A549 (cell line): ENCODE measurements at regions of chr20 and their contacts with region 1.

Region 1: DNA sequence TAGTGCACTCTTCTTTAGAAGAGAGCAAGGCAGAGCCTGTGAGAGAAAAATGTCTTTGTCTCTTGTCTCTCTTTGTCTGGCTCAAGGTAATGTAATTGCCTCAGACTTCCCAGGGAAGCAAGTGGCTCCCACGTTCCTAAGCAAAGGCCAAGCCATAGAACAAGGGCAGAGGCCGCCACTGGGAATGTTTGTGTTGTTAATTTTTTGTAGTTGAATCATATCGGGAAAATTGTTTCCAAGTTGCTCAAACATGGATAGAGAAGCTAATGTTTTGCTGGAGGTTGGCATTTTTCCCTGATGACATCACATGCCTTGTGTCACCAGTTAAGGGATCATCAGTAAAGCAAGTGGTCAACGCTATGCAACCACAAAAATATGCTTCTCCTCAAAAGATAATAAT is 211.5 kb upstream of the FOXA2 start:
- DNase-seq: peak; percentile 79 to 97
- ATAC-seq: peak; percentile 92
- H3K4me3 ChIP-seq: no peak overlapping the region
- H3K27ac ChIP-seq: peak overlapping the region; percentile 92 to 97
- H3K4me1 ChIP-seq: peaks cover 66% of the 10 kb centered on the region
- CTCF ChIP-seq: no peak
- EP300 ChIP-seq: peak; percentile 96 to 97; a peak in 4 of 5 replicates
- POLR2A ChIP-seq: no peak
- RAD21 ChIP-seq: peak; percentile 38 to 78

Region 2: GRCh38 chr20:22590662-22591061 is 205.2 kb before region 1 on chr20:
- CTCF ChIA-PET with region 1: no interaction called
- POLR2A ChIA-PET with region 1: no interaction called
- DNase-seq: no peak
- ATAC-seq: no peak
- H3K4me3 ChIP-seq: no peak overlapping the region
- H3K27ac ChIP-seq: no peak overlapping the region
- H3K4me1 ChIP-seq: peaks cover 13% of the 10 kb centered on the region
- CTCF ChIP-seq: no peak
- EP300 ChIP-seq: no peak
- POLR2A ChIP-seq: no peak
- RAD21 ChIP-seq: no peak

Region 3: DNA sequence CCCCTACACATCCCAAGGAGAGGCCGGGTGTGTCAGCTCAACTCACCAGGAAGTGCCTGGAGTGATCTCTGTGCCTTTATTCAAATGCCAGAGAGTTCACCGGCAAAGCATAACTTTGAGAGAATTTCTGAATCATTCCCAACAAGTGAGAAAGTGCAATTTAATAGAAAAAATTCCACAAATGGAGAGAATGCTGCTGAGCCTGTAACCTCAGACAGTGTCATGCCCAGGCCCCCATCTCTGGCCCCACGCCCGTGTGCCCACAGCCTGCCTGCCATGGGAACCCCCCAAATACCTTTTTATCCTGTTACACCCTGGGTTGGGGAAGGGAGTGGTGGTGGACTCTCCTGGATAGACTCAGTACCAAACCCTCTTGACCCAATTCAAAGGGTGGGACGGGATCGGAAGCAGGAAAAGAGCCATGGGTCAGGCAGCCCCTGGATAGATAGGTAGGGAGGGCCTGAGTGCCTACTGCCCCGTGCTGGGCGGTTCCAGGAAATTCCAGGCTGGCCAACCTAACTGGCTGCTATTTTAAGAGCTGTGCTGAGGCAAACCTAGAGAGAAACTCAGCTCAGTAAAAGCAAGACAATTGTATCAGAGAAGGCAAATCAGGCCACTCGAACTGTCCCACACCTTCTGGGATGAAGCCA is 32.5 kb before region 1 on chr20:
- CTCF ChIA-PET with region 1: interaction called, 5 read pairs
- POLR2A ChIA-PET with region 1: interaction called, 13 read pairs
- DNase-seq: peak; percentile 55 to 84
- ATAC-seq: peak; percentile 88
- H3K4me3 ChIP-seq: peak overlapping the region; percentile 4; the same call in 2 of the 3 replicates
- H3K27ac ChIP-seq: peak overlapping the region; percentile 92 to 98
- H3K4me1 ChIP-seq: peaks cover 41% of the 10 kb centered on the region
- CTCF ChIP-seq: no peak
- EP300 ChIP-seq: peak in 1 of 2 experiments; percentile 66; a peak in 1 of 5 replicates
- POLR2A ChIP-seq: no peak
- RAD21 ChIP-seq: peak in 1 of 2 experiments; percentile 7; a peak in 2 of 5 replicates

Region 4: DNA sequence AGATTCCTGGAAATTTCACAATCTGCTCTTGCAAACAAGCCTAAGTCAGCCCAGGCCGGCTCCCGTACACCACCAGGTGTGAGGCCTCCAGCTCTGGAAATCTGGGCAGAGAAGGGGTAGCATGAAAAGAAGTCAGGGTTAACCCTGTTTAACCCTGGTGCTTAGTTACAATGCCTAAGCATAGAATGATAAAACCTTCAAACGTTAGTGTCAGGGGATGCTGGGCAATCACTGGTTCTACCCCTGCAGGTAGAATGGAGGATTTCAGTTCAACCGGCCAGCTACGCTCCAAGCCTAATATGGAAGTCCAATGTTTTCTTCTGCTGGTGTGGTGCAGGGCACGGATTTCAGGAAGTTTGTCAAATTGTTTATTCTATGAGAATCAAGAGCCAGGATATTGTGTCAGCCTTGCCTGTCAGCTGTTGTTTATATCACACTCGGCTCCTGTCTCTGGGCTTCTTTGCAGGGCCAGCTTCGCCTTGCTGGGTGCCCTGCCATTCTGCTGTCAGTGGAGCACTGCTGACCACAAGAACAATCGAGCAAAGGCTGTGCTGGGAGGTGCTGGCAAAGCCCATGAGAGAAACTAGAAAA is 310.5 kb after region 1 on chr20:
- CTCF ChIA-PET with region 1: no interaction called
- POLR2A ChIA-PET with region 1: no interaction called
- DNase-seq: no peak
- ATAC-seq: peak in 1 of 2 experiments; percentile 59; a peak in 2 of 6 replicates
- H3K4me3 ChIP-seq: no peak overlapping the region
- H3K27ac ChIP-seq: no peak overlapping the region
- H3K4me1 ChIP-seq: no peaks in the 10 kb centered on the region
- CTCF ChIP-seq: no peak
- EP300 ChIP-seq: no peak
- POLR2A ChIP-seq: no peak
- RAD21 ChIP-seq: no peak